OCI-LY7 (cell line): ENCODE measurements at regions of chr9 and their contacts with region 1.

Region 1: GRCh38 chr9:20941174-20941690 is 90.2 kb downstream of the HACD4 start:
- DNase-seq: peak; percentile 84
- H3K4me3 ChIP-seq: no peak overlapping the region
- H3K27ac ChIP-seq: no peak overlapping the region
- H3K4me1 ChIP-seq: no peaks in the 10 kb centered on the region
- CTCF ChIP-seq: peak; percentile 95

Region 2: DNA sequence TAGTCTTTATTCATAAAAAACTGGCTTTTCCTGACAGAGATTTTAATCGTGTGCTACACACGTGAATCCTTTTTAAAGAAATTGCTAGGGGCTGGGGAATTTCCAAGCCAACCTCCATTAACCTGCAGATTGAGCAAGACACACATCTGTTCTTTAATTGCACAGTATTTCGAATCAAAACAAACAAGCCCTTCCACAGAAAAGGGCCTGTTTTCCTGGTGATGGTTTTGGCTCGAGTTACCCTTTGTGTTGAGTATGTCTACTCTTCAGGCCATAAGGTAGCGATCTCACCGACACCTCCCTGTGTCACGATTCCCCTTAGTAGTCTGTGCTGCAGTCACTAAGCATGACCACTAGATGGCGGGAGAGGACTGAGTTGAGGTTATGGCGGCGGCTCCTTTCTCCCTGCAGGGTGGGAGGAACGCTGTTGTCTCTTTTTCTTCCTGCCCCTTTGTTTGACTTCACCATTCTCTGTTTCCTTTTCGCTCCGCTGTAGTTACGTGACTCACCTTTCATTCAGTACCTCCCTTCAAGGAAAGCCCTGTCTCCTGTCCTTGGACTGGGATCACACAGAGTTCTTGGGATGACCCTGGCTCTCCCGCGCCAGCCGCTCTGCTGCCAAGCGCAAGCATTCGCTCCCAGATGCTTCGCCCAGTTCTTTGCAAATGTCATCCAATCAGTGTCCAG is 1015.3 kb before region 1 on chr9:
- CTCF ChIA-PET with region 1: no interaction called
- POLR2A ChIA-PET with region 1: no interaction called
- intact Hi-C with region 1: loop called (anchors 1 kb)
- DNase-seq: peak; percentile 72
- H3K4me3 ChIP-seq: no peak overlapping the region
- H3K27ac ChIP-seq: no peak overlapping the region
- H3K4me1 ChIP-seq: no peaks in the 10 kb centered on the region
- CTCF ChIP-seq: peak; percentile 96

Region 3: DNA sequence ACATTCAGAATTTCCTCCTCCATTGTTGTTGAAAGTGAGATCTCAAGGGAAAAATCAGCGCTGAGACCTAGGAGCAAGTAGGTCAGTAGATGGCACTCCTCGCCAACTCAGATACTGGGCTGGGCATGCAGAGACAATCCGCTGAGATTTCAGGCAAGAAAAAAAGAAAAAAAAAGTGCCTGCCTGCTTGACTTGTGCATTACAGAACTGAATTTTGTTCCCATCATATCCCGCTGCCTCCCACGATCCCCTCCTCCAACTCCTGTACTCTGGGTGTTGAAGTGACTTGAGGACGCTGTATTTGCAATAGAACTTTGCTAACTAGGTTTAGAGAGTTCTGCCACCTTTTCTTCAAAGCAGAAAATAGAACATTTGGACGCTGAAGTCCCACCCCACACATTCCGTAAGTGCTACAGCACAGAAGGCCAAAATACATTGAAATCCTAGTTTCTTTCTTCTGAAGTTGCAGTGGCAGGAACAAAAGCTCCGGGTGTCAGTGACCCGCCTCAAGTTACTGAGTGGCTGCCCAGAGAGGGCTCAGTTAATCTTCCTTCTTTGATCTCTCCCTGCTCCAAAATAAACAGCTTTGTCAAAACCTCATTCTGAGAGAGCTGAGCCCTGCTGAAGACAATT is 584.7 kb before region 1 on chr9:
- CTCF ChIA-PET with region 1: interaction called, 3 read pairs
- POLR2A ChIA-PET with region 1: no interaction called
- intact Hi-C with region 1: loop called (anchors 1 kb)
- DNase-seq: peak; percentile 65
- H3K4me3 ChIP-seq: no peak overlapping the region
- H3K27ac ChIP-seq: no peak overlapping the region
- H3K4me1 ChIP-seq: peaks cover 6% of the 10 kb centered on the region
- CTCF ChIP-seq: peak; percentile 79

Region 4: GRCh38 chr9:20486552-20486951 is 454.7 kb before region 1 on chr9:
- CTCF ChIA-PET with region 1: no interaction called
- POLR2A ChIA-PET with region 1: no interaction called
- intact Hi-C with region 1: no loop called
- DNase-seq: no peak
- H3K4me3 ChIP-seq: no peak overlapping the region
- H3K27ac ChIP-seq: no peak overlapping the region
- H3K4me1 ChIP-seq: no peaks in the 10 kb centered on the region
- CTCF ChIP-seq: no peak

Region 5: GRCh38 chr9:20544953-20545622 is 396.1 kb before region 1 on chr9:
- CTCF ChIA-PET with region 1: no interaction called
- POLR2A ChIA-PET with region 1: no interaction called
- intact Hi-C with region 1: loop called (anchors 10 kb)
- DNase-seq: no peak
- H3K4me3 ChIP-seq: no peak overlapping the region
- H3K27ac ChIP-seq: no peak overlapping the region
- H3K4me1 ChIP-seq: no peaks in the 10 kb centered on the region
- CTCF ChIP-seq: no peak

Region 6: DNA sequence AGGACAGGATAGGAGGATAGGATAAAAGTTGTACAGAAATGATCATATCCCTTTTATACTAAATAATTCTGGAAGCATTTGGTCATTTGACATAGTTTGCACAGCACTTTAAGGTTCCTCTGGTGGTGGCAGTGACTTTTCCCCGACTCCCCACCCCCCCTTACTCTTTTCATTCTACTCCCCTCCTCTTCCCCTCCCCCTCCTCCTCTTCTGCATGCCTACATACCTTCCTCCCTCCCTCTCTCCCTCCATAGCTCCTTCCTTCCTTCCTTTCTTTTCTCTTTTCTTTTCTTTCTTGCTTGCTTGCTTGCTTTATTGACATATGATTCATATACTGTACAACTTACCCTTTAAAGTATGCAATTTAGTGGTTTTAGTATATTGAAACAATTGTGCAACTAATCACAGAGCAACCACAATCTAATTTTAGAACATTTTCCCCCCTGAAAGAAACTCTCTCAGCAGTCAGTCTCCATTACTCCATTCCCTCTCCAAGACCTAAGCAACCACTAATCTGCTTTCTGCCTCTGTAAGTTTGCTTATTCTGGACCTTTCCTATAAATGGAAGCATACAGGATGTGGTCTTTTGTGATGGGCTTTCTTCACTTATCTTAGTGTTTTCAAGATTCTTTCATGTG is 68.8 kb before region 1 on chr9:
- CTCF ChIA-PET with region 1: no interaction called
- POLR2A ChIA-PET with region 1: no interaction called
- intact Hi-C with region 1: no loop called
- DNase-seq: no peak
- H3K4me3 ChIP-seq: no peak overlapping the region
- H3K27ac ChIP-seq: no peak overlapping the region
- H3K4me1 ChIP-seq: no peaks in the 10 kb centered on the region
- CTCF ChIP-seq: no peak

Region 7: GRCh38 chr9:20972684-20973083 is 31.5 kb after region 1 on chr9:
- CTCF ChIA-PET with region 1: no interaction called
- POLR2A ChIA-PET with region 1: no interaction called
- intact Hi-C with region 1: no loop called
- DNase-seq: no peak
- H3K4me3 ChIP-seq: no peak overlapping the region
- H3K27ac ChIP-seq: peak overlapping the region; percentile 64
- H3K4me1 ChIP-seq: peaks cover 21% of the 10 kb centered on the region
- CTCF ChIP-seq: no peak